Right ventricle myocardium inferior (tissue), 1 donor: ENCODE measurements at regions of chr2 and their contacts with region 1.

Region 1: DNA sequence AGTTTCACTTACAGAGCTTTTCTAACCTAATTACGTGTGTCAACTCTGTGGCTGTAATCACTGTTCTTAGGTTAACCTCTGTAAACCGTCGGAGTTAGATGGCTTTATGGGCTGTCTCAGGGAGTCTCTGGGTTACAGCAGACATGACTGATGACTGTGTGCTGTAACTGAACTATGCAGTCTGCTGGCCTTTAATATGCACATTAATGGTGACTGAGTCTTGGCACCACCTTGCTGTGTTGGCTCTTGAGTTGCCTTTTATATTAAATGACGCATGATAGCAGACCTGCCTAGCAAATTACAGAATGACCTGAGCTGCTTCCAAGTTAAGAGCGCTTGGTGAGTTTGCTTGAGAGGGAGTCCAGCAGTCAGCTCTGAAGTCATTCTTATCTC is 90.1 kb downstream of the ACKR3 start:
- DNase-seq: no peak
- ATAC-seq: no peak

Region 2: DNA sequence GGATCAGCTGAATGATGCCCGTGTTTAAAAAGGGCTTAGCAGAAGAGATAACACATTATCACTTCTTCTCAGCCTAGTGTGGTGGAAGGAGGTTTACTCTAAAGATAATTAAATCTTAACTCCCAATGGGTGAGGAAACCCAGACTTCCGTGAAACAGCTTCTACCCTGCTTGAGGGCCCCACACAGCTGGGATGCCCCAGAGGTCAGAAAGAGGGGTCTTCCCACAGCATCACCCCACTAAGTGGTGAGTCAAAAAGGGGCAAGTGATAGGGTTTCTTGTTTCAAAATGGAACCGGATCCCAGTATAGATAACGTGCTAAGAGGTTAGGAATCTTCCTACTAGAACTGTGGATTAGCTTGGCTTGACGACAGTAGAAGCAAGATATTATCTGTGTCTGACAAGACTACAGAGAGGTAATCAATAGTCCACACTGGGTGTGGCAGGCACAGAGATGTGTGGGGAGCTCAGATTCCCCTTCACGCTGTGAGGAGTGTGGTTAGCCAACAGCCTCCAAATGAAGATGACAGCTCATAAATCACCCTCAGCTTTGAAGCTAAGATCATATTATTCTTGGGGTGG is 296.4 kb after region 1 on chr2:
- intact Hi-C with region 1: no loop called
- DNase-seq: no peak
- ATAC-seq: no peak

Region 3: GRCh38 chr2:236972491-236973342 is 313.0 kb after region 1 on chr2:
- intact Hi-C with region 1: loop called (anchors 10 kb)
- DNase-seq: no peak
- ATAC-seq: peak; percentile 44